ENCODE measurements at regions of chr9 and their contacts with region 1.

Region 1: DNA sequence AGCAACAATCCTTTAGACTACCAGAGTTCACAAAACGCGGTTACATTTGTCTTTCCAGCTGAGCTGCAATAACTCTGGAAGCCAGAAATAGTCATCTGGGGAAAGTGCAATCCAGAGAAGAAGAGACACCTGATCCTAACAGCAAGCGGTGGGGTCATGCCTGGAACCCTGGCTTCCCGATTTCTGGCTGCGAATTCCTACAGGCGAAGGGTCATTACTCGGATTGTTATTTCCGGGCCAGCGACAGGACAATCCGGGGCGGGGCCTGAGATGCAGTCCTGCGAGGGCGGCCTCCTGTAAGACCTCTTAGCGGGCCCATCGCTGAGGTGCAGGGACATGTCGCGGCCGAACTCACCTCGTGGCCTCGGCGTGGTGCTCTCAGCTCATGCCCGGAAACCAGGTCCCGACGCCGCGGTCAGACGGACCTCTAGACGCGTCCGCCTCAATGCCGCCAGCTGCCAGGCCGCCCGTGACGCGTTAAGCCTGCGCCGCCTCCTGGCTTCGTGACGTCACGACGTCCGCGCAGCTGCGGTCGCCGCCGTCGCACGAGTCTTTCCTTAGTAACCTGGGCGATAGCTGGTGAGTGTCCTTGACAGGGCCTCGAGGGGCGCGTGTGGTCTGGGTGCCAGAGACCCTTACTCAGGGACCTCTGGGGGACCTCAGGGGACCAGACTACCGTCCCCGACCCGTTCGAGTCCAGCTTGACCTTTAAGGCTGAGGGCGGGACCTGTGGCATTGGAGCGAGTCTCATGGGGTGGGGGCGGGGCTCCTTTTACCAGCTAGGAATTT is at the starts of genes MRRF and RBM18:
- DNase-seq: peak; percentile 79 to 92
- H3K4me3 ChIP-seq: peak within 1 kb of the TSS; percentile 73
- H3K27ac ChIP-seq: peak within 1 kb of the TSS; percentile 75
- H3K4me1 ChIP-seq: peaks cover 18% of the 10 kb centered on the region
- H3K27me3 ChIP-seq: no peaks in the 10 kb centered on the region
- CTCF ChIP-seq: no peak
- total RNA-seq, gene MRRF: 69.0 and 79.5 TPM in 2 replicates
- total RNA-seq, gene RBM18: 15.1 and 16.1 TPM in 2 replicates

Region 2: DNA sequence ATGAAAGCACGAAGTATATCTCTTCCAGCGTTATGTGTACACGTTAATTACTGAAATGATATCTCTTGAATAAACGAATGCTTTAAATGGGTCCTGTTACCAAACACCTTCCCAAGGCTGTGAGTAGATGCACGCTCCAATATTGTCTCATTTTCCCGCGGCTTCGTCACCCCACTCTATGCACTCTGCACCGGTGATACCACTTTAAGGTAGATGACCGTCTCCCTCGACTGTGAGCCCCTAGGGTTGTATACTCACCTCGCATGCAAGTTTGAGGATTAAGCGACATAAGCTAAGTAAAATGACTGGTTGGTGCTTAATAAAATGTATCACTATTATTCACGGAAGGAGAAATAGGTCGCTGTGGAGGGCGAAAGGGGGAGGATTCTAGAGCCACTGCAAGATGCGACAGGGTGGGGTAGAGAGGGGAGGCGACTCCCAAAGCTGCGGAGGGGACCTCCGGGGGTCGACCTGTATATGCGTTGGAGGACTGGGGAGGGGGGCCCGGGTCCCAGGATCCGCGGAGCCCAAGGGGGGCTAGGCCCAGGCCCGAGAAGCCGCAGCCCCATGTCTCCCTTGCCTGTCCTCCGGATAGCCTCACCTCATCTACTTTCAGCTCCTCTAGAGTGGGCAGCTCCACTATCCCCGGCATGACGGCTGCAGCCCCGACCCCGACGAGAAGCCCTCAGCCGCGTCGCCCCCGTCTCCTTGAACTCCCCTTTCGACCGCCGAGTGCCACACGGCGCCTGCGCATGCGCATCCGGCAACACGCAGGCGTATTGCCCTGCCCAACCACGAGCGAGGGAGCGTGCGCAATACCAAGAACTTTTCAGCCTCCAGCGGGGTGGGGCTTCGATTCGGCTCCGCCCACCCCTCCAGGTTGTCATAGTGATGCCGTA is 105.3 kb before region 1 on chr9 and contains the starts of genes MORN5 and NDUFA8:
- CTCF ChIA-PET with region 1: no interaction called
- POLR2A ChIA-PET with region 1: no interaction called
- intact Hi-C with region 1: loop called (anchors 2 kb)
- DNase-seq: peak; percentile 81 to 98
- H3K4me3 ChIP-seq: peak within 1 kb of the TSS; percentile 90
- H3K27ac ChIP-seq: no peak within 1 kb of the TSS
- H3K4me1 ChIP-seq: peaks cover 12% of the 10 kb centered on the region; the same call in 1 of the 2 replicates
- H3K27me3 ChIP-seq: peaks cover 20% of the 10 kb centered on the region
- CTCF ChIP-seq: no peak
- total RNA-seq, gene MORN5: not detected in 2 replicates
- total RNA-seq, gene NDUFA8: 73.4 and 84.6 TPM in 2 replicates

Region 3: DNA sequence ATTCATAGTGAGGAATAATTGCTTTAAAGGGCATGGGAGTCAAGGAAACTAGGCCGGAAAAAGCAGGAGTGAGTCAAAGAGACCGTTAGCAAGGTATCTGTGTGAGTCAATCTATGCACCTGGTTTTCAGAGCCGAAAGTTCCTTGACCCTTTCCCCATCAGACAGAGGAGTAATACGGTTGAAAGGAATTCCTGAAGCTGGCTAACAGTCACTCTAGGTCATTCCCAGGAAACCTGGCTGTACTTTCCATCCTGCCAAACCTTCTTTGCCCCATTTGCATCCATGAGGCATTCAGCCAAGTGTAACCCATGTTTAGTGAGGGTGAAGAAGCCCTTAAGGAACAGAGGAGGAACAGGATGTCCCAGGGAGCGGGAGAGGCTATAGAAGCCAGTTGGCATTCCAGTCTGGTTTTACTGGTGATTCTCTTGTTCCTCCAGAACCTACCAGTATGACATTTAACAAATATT is 16.1 kb before region 1 on chr9:
- CTCF ChIA-PET with region 1: no interaction called
- POLR2A ChIA-PET with region 1: interaction called, 25 read pairs
- intact Hi-C with region 1: no loop called
- DNase-seq: no peak
- H3K4me3 ChIP-seq: no peak overlapping the region
- H3K27ac ChIP-seq: no peak overlapping the region
- H3K4me1 ChIP-seq: no peaks in the 10 kb centered on the region
- H3K27me3 ChIP-seq: no peaks in the 10 kb centered on the region
- CTCF ChIP-seq: no peak

Region 4: GRCh38 chr9:122277285-122277897 is 12.8 kb after region 1 on chr9:
- CTCF ChIA-PET with region 1: no interaction called
- POLR2A ChIA-PET with region 1: no interaction called
- intact Hi-C with region 1: no loop called
- DNase-seq: no peak
- H3K4me3 ChIP-seq: no peak overlapping the region
- H3K27ac ChIP-seq: no peak overlapping the region
- H3K4me1 ChIP-seq: no peaks in the 10 kb centered on the region; the same call in 1 of the 2 replicates
- H3K27me3 ChIP-seq: no peaks in the 10 kb centered on the region
- CTCF ChIP-seq: no peak

Region 5: DNA sequence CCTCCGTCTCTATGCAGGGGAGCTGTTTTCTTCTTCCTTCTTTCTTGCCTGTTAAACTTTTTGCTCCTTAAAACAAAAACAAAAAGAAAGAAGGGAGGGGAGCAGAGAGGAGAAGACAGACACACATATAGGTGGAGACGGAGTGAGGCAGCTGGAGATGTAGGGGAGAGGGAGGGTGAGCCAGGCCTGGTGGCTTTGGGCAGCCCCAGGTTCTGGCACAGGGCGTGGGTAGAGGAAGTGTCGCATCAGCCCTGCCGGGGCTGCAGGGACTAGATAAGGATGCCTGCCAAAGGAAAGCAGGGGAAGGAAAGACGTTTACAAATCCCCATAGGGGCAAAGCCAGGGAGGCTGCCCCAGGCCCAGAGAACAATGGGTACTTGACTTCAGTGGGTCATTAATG is 67.5 kb after region 1 on chr9:
- CTCF ChIA-PET with region 1: interaction called, 12 read pairs
- POLR2A ChIA-PET with region 1: no interaction called
- intact Hi-C with region 1: no loop called
- DNase-seq: no peak
- H3K4me3 ChIP-seq: no peak overlapping the region
- H3K27ac ChIP-seq: no peak overlapping the region
- H3K4me1 ChIP-seq: no peaks in the 10 kb centered on the region
- H3K27me3 ChIP-seq: no peaks in the 10 kb centered on the region
- CTCF ChIP-seq: no peak

Measured in PC-9 (cell line).